Pancreas (tissue), 10 donors: ENCODE measurements at regions of chr16 and their contacts with region 1.

Region 1: DNA sequence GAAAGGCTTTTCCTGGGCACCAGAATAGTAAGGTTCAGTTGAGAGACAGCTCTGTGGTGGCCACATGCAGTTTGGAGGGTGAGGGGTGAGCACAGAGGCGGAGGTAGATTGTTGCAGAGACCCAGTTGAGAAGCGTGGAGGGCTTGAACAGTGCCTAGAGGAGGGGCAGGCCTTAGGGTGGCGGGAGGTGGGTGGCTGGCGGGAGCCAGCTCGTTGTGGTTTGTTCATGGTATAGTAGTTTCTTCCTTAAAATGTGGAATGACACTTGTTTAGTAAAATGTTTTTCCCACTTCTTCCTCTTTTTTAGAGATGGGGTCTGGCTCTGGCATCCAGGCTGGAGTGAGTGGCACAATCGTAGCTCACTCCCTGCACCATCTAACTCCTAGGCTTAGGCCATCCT is 14.2 kb downstream of the USP10 start:
- DNase-seq: no peak
- ATAC-seq: peak in 1 of 4 donors; percentile 42
- H3K4me3 ChIP-seq: no peak overlapping the region
- H3K27ac ChIP-seq: no peak overlapping the region
- H3K4me1 ChIP-seq: peaks cover 7 to 13% (median 9%) of the 10 kb centered on the region in 3 donors
- H3K27me3 ChIP-seq: no peaks in the 10 kb centered on the region
- CTCF ChIP-seq: no peak

Region 2: GRCh38 chr16:84629580-84629979 is 84.4 kb before region 1 on chr16:
- intact Hi-C with region 1: loop called in 1 of 3 experiments (anchors 10 kb)
- DNase-seq: no peak
- ATAC-seq: no peak
- H3K4me3 ChIP-seq: no peak overlapping the region
- H3K27ac ChIP-seq: no peak overlapping the region
- H3K4me1 ChIP-seq: peaks cover 0 to 5% (median 0%) of the 10 kb centered on the region in 3 donors
- H3K27me3 ChIP-seq: no peaks in the 10 kb centered on the region
- CTCF ChIP-seq: no peak